Tibial artery (tissue), 4 donors: ENCODE measurements at regions of chr13 and their contacts with region 1.

Region 1: GRCh38 chr13:75372517-75372916 is 109.5 kb downstream of the TBC1D4 start:
- DNase-seq: no peak
- H3K4me3 ChIP-seq: no peak overlapping the region
- H3K27ac ChIP-seq: no peak overlapping the region
- H3K4me1 ChIP-seq: peaks cover 0 to 18% (median 9%) of the 10 kb centered on the region in 4 donors
- H3K27me3 ChIP-seq: no peaks in the 10 kb centered on the region
- CTCF ChIP-seq: peak; percentile 55 to 73

Region 2: DNA sequence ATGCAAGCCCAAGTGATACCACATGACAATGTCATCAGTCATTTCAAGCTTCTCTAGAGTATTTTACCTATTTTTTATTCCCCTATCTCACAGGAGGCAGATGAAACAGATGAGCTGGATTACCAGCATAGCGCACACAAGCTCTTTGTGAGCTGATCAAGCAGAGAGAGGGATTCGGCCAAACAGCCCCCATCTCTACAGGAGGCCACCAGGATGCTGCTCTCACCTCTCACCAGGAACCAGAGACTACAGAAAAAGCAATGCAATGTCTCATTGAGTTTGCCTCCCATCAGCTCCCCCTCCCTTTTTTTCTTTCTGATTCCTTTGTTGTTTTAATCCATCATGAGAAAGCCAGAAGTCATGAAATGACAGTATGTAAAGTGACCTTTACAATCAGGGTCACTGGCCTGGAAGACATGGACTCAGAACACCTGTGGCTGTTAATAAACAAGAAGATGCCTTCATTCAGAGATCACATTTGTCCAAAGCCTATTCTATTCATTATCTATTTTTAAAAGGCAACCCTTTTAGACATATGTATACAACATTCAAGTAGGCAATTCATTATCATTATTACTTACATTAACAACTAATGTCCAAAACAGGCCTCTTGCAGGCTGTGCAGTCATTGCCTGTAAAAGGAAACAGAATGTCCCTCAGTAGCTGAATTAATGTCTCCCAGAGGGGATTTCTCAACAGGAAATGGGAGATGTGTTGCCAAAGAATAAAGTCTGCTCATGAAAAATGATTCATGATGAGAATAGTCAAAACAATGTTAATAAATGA is 547.2 kb before region 1 on chr13:
- intact Hi-C with region 1: no loop called
- DNase-seq: no peak
- H3K4me3 ChIP-seq: no peak overlapping the region
- H3K27ac ChIP-seq: no peak overlapping the region
- H3K4me1 ChIP-seq: peaks cover 0 to 11% (median 0%) of the 10 kb centered on the region in 4 donors
- H3K27me3 ChIP-seq: no peaks in the 10 kb centered on the region
- CTCF ChIP-seq: no peak

Region 3: GRCh38 chr13:75425216-75426009 is 52.9 kb after region 1 on chr13:
- intact Hi-C with region 1: no loop called
- DNase-seq: no peak
- H3K4me3 ChIP-seq: no peak overlapping the region
- H3K27ac ChIP-seq: no peak overlapping the region
- H3K4me1 ChIP-seq: no peaks in the 10 kb centered on the region
- H3K27me3 ChIP-seq: no peaks in the 10 kb centered on the region
- CTCF ChIP-seq: no peak

Region 4: DNA sequence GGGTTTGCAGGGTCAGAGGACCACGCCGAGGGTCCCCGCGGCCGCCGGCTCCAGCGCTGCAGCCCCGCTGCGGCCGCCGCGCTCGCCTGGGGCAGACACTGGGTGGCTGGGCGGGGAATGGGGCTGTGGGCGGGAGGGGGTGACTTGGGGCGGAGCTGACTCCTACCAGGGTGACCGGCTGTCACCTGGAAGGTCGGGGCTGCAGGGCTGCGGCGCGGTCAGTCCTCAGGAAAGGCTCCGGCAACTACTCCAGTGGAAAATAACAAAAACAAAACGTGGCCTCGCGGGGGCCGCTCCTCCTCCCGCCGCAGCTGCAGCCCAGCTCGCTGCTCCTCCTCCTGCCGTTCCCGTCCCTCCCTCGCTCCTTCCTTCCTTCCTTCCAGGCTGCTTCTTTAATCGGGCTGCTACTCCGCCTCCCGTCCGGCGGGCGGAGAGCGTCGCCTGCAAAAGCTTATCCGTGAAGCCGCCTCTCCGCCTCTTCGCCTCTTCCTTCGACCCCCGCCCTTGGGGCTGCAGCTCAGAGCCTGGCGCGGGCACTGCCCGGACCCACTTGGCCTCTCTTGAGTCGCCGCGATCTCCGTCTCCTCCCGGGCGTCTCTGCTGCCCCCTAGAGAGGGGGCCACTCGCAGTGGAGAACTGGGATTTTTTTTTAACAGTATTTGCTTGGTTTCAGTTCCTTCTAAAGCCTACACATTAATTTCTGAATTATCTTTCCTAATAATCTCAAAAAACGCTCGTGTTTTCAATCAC is 109.7 kb after region 1 on chr13 and contains the start of gene TBC1D4:
- intact Hi-C with region 1: loop called (anchors 5 kb)
- DNase-seq: peak; percentile 83 to 90
- H3K4me3 ChIP-seq: peak within 1 kb of the TSS; percentile 79 to 87
- H3K27ac ChIP-seq: peak within 1 kb of the TSS; percentile 51 to 75
- H3K4me1 ChIP-seq: peaks cover 0 to 11% (median 4%) of the 10 kb centered on the region in 4 donors
- H3K27me3 ChIP-seq: no peaks in the 10 kb centered on the region
- CTCF ChIP-seq: peak; percentile 39 to 76

Region 5: GRCh38 chr13:75549262-75550158 is 177.0 kb after region 1 on chr13 and contains the start of gene UCHL3:
- intact Hi-C with region 1: loop called (anchors 5 kb)
- DNase-seq: peak; percentile 92 to 95
- H3K4me3 ChIP-seq: peak within 1 kb of the TSS; percentile 70 to 92
- H3K27ac ChIP-seq: peak within 1 kb of the TSS; percentile 68 to 72
- H3K4me1 ChIP-seq: peaks cover 0 to 16% (median 13%) of the 10 kb centered on the region in 4 donors
- H3K27me3 ChIP-seq: no peaks in the 10 kb centered on the region
- CTCF ChIP-seq: peak; percentile 80 to 85